Right ventricle myocardium superior (tissue), 1 donor: ENCODE measurements at regions of chr11 and their contacts with region 1.

Region 1: GRCh38 chr11:2888266-2888968 is 2.8 kb upstream of the CDKN1C start:
- DNase-seq: peak; percentile 95
- ATAC-seq: peak; percentile 62

Region 2: GRCh38 chr11:2428322-2428795 is 460.1 kb before region 1 on chr11:
- intact Hi-C with region 1: loop called (anchors 5 kb)
- DNase-seq: peak; percentile 87
- ATAC-seq: peak; percentile 90

Region 3: GRCh38 chr11:2532704-2533586 is 355.5 kb before region 1 on chr11:
- intact Hi-C with region 1: loop called (anchors 1 kb)
- DNase-seq: peak; percentile 93
- ATAC-seq: peak; percentile 89

Region 4: DNA sequence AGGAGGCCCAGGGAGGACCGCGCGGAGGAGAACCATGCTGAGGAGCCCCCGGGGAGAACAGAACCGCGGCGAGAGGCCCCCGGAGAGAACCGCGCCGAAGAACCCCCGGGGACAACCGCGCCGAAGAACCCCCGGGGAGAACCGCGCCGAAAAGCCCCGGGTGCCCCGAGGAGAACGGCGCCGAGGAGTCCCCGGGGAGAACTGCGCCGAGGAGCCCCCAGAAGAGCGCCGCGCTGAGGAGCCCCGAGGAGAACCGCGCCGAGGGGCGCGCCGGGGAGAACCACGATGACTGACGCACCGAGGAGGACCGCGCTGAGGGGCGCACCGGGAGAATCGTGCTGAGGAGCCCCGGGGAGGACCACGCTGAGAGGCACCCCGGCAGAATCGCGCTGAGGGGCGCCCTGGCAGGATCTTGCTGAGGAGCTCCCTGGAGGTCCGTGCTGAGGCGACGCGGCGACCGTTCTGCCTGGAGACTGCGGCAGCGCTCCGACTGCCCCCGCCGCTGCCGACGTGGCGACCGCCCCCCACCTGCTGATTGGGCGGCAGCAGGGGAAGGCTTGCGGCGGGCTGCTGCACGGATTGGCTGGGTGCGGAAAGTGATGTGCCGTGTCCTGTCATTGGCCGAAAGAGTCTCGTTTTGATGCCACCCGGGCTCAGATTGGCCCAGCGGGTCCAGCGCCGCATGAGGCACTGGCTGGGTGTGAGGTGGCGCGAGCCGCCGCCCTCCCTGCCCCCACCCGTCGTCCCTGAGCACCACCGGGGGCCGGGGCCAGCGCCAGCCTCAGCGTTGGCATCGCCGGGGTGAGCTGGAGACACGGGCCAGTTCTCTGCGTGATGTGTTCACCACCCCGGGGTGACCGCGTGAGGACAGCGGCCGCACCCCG is 188.6 kb before region 1 on chr11 and contains the start of gene KCNQ1OT1:
- intact Hi-C with region 1: loop called (anchors 5 kb)
- DNase-seq: peak; percentile 93
- ATAC-seq: peak; percentile 95
- total RNA-seq, gene KCNQ1OT1: 0.35 TPM